Caco-2 (cell line): ENCODE measurements at regions of chr13 and their contacts with region 1.

Region 1: DNA sequence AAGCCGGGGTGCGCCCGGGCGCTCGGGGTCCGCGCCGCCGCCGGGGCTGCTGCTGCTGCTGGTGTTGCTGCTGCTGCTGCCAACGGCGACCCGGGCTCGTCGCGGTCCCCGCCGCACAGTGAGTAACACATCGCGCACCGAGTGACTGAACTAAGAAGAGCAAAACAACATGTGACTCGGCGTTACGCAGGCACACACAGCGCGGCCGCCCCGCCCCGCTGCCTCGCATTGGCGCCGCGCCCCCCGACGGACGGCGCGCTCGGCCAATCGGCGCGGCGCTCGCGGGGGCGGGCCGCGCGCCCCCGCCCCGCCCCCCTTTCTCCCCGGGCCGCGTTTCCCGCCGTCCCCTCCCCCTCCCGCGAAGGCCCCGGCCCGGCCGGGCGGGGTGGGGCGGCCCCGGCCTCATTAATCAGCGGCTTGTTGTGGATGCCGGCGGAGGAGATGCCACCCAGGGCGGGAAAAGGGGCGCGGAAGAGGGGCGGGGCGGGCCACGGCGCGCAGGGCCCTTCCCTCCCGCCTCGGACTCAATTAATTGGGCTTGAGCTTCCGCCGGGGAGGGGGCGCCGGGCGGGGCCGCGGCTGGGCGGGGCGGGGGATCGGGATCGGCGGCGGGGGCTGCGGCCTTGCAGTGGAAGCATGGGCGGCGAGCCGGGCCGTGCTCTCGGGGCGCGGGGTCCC is at the start of gene IRS2:
- DNase-seq: peak; percentile 91
- H3K4me3 ChIP-seq: peak within 1 kb of the TSS; percentile 61
- H3K4me3 Mint-ChIP-seq: peak within 1 kb of the TSS; percentile 71
- H3K27ac Mint-ChIP-seq: no peak within 1 kb of the TSS
- H3K4me1 ChIP-seq: peaks cover 4% of the 10 kb centered on the region; the same call in 1 of the 2 replicates
- H3K4me1 Mint-ChIP-seq: no peaks in the 10 kb centered on the region
- H3K27me3 ChIP-seq: no peaks in the 10 kb centered on the region
- H3K27me3 Mint-ChIP-seq: peaks cover 20% of the 10 kb centered on the region
- CTCF ChIP-seq: no peak
- total RNA-seq, gene IRS2: 5.4 and 5.5 TPM in 2 replicates

Region 2: DNA sequence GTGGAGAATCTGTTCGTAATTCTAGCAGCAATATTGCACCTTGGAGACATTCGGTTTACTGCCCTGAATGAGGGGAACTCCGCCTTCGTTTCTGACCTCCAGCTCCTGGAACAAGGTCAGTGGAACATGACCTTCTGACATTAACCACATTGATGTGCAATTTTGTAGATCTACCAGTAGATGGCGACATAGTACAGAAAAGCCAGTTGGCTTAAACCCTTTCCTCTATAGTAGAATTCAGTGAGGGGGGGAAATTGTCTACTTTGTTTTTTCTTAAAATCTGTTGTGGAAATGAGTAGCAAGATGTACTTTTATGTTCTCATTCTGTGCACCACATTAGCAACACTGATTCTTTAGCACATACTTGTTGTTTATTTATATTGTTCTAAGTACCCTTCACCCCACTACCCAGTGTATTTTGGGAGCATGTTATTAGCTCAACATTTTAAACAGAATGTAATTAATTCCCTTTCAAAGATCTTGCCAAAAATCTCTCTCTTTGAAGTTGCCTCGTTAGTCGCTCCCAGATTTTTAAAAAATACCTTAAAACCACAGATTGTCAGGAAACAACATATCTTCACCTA is 825.0 kb before region 1 on chr13:
- CTCF ChIA-PET with region 1: interaction called, 5 read pairs
- POLR2A ChIA-PET with region 1: no interaction called
- intact Hi-C with region 1: loop called (anchors 2 kb)
- DNase-seq: peak in 1 of 2 experiments; percentile 48
- H3K4me3 ChIP-seq: no peak overlapping the region
- H3K4me3 Mint-ChIP-seq: no peak overlapping the region
- H3K27ac Mint-ChIP-seq: no peak overlapping the region
- H3K4me1 ChIP-seq: no peaks in the 10 kb centered on the region
- H3K4me1 Mint-ChIP-seq: peaks cover 15% of the 10 kb centered on the region
- H3K27me3 ChIP-seq: no peaks in the 10 kb centered on the region
- H3K27me3 Mint-ChIP-seq: no peaks in the 10 kb centered on the region
- CTCF ChIP-seq: peak; percentile 78 to 87

Region 3: GRCh38 chr13:109145631-109146030 is 641.0 kb before region 1 on chr13:
- CTCF ChIA-PET with region 1: no interaction called
- POLR2A ChIA-PET with region 1: no interaction called
- intact Hi-C with region 1: loop called (anchors 1 kb)
- DNase-seq: peak in 1 of 2 experiments; percentile 60
- H3K4me3 ChIP-seq: no peak overlapping the region
- H3K4me3 Mint-ChIP-seq: no peak overlapping the region
- H3K27ac Mint-ChIP-seq: no peak overlapping the region
- H3K4me1 ChIP-seq: no peaks in the 10 kb centered on the region
- H3K4me1 Mint-ChIP-seq: peaks cover 7% of the 10 kb centered on the region
- H3K27me3 ChIP-seq: no peaks in the 10 kb centered on the region
- H3K27me3 Mint-ChIP-seq: no peaks in the 10 kb centered on the region
- CTCF ChIP-seq: peak; percentile 65 to 90

Region 4: GRCh38 chr13:109586509-109587346 is 199.9 kb before region 1 on chr13:
- CTCF ChIA-PET with region 1: interaction called, 5 read pairs
- POLR2A ChIA-PET with region 1: interaction called, 3 read pairs
- intact Hi-C with region 1: loop called (anchors 2 kb)
- DNase-seq: peak; percentile 77 to 90
- H3K4me3 ChIP-seq: 0 out of 2 replicates have a peak overlapping the region, but pooled peaks have one; percentile 8
- H3K4me3 Mint-ChIP-seq: peak overlapping the region; percentile 64
- H3K27ac Mint-ChIP-seq: peak overlapping the region; percentile 77
- H3K4me1 ChIP-seq: peaks cover 30% of the 10 kb centered on the region
- H3K4me1 Mint-ChIP-seq: peaks cover 34% of the 10 kb centered on the region
- H3K27me3 ChIP-seq: no peaks in the 10 kb centered on the region
- H3K27me3 Mint-ChIP-seq: no peaks in the 10 kb centered on the region
- CTCF ChIP-seq: peak in 1 of 2 experiments; percentile 3

Region 5: GRCh38 chr13:109684824-109685202 is 101.8 kb before region 1 on chr13:
- CTCF ChIA-PET with region 1: no interaction called
- POLR2A ChIA-PET with region 1: no interaction called
- intact Hi-C with region 1: no loop called
- DNase-seq: no peak
- H3K4me3 ChIP-seq: no peak overlapping the region
- H3K4me3 Mint-ChIP-seq: no peak overlapping the region
- H3K27ac Mint-ChIP-seq: no peak overlapping the region
- H3K4me1 ChIP-seq: no peaks in the 10 kb centered on the region
- H3K4me1 Mint-ChIP-seq: peaks cover 6% of the 10 kb centered on the region
- H3K27me3 ChIP-seq: no peaks in the 10 kb centered on the region
- H3K27me3 Mint-ChIP-seq: peaks cover 7% of the 10 kb centered on the region
- CTCF ChIP-seq: no peak

Region 6: GRCh38 chr13:110108347-110109174 is 322.0 kb after region 1 on chr13:
- CTCF ChIA-PET with region 1: no interaction called
- POLR2A ChIA-PET with region 1: no interaction called
- intact Hi-C with region 1: loop called (anchors 2 kb)
- DNase-seq: peak; percentile 82 to 84
- H3K4me3 ChIP-seq: no peak overlapping the region
- H3K4me3 Mint-ChIP-seq: no peak overlapping the region
- H3K27ac Mint-ChIP-seq: no peak overlapping the region
- H3K4me1 ChIP-seq: no peaks in the 10 kb centered on the region
- H3K4me1 Mint-ChIP-seq: peaks cover 6% of the 10 kb centered on the region
- H3K27me3 ChIP-seq: no peaks in the 10 kb centered on the region
- H3K27me3 Mint-ChIP-seq: no peaks in the 10 kb centered on the region
- CTCF ChIP-seq: peak; percentile 73 to 80